ENCODE measurements at regions of chr20 and their contacts with region 1.

Region 1: GRCh38 chr20:47272893-47273590 is 83.5 kb downstream of the ZMYND8 start:
- DNase-seq: peak; percentile 89
- H3K4me3 Mint-ChIP-seq: peak overlapping the region; percentile 52
- H3K27ac Mint-ChIP-seq: peak overlapping the region; percentile 99
- H3K4me1 Mint-ChIP-seq: peaks cover 37% of the 10 kb centered on the region
- H3K27me3 Mint-ChIP-seq: no peaks in the 10 kb centered on the region
- CTCF ChIP-seq: peak; percentile 66

Region 2: DNA sequence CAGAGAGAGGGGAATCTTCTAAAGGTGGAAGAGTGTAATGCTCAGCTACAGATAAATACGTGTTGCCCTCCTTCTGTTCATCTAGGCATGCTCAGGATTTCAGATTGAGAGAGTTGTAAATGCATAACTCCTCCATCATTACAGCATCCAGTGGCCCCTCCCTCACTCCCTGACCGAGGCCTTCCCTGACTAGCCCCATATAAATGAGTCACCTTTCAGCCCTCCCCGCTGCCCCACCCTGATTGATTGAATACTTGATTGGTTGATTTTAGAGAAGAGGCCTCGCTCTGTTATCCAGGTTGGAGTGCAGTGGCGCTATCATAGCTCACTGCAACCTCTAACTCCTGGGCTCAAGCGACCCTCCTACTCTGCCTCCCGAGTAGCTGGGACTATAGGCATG is 184.7 kb before region 1 on chr20:
- CTCF ChIA-PET with region 1: no interaction called
- POLR2A ChIA-PET with region 1: no interaction called
- intact Hi-C with region 1: no loop called
- DNase-seq: no peak
- H3K4me3 Mint-ChIP-seq: no peak overlapping the region
- H3K27ac Mint-ChIP-seq: no peak overlapping the region
- H3K4me1 Mint-ChIP-seq: no peaks in the 10 kb centered on the region
- H3K27me3 Mint-ChIP-seq: no peaks in the 10 kb centered on the region
- CTCF ChIP-seq: no peak

Region 3: GRCh38 chr20:47150403-47151152 is 122.5 kb before region 1 on chr20:
- CTCF ChIA-PET with region 1: no interaction called
- POLR2A ChIA-PET with region 1: no interaction called
- intact Hi-C with region 1: no loop called
- DNase-seq: peak; percentile 88
- H3K4me3 Mint-ChIP-seq: no peak overlapping the region
- H3K27ac Mint-ChIP-seq: no peak overlapping the region
- H3K4me1 Mint-ChIP-seq: peaks cover 5% of the 10 kb centered on the region
- H3K27me3 Mint-ChIP-seq: no peaks in the 10 kb centered on the region
- CTCF ChIP-seq: peak; percentile 57

Region 4: DNA sequence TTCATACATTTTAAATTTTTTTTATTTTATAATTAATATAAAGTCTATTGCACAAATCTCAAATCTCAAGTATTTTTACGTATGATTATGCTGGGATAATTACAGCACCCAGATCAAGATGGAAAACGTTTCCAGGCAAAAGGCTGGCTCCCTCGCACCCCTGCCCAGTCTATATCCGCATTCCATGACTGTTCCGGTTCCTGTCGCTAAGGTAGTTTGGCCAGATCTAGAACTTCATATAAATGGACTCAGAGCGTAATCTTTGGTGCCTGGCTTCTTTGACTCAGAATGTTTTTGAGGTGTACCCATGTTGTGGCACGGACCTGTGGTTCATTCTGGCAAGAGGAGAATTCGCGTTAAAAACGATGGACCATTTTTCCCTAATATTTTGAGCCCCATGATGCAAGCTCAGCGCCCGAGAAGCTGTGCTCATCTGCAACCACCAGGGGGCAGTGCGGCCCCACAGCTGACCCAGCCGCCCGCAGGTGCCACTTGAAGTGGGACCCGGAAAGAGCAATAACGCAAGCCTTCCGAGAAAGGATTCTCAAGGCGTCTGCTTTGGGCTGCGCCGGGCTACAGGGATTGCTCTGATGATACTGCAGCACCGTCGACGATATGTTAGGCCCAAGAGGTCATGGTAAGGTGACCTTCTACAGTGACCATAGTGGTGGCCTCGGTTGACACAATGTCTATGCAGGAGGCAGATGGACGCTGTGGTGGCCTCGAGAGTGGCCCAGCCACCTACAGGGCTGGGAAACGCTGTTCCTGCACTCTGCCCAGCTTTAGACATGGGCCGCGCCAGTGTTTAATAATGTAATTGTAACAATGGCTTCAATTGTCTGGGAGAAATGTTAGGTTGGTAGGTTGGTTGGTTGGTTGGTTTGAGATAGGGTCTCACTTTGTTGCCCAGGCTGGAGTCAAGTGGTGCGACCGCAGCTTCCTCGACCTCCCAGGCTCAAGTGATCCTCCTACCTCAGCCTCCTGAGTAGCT is 76.7 kb before region 1 on chr20:
- CTCF ChIA-PET with region 1: interaction called, 5 read pairs
- POLR2A ChIA-PET with region 1: interaction called, 3 read pairs
- intact Hi-C with region 1: loop called (anchors 1 kb)
- DNase-seq: peak; percentile 70
- H3K4me3 Mint-ChIP-seq: no peak overlapping the region
- H3K27ac Mint-ChIP-seq: no peak overlapping the region
- H3K4me1 Mint-ChIP-seq: peaks cover 5% of the 10 kb centered on the region
- H3K27me3 Mint-ChIP-seq: no peaks in the 10 kb centered on the region
- CTCF ChIP-seq: peak; percentile 93

Region 5: DNA sequence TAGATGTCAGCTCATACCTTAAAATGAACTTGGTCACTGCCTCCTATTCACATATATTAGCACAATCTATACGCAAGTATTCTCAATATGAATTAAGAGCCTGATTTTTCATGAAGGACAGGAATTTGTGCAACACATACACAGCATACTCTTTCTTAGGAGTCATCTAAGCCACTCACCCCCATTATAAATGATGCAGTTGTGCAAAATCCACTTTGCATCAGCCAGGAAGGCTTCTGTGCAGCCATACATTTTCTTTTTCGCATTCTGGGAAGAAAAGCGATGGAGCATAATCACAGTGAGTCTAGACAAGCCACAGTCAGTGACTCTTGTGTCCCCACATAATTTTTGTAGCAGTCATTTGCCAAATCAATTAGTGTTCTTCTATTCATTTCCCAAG is 17.0 kb after region 1 on chr20:
- CTCF ChIA-PET with region 1: interaction called, 55 read pairs
- POLR2A ChIA-PET with region 1: interaction called, 17 read pairs
- intact Hi-C with region 1: no loop called
- DNase-seq: no peak
- H3K4me3 Mint-ChIP-seq: no peak overlapping the region
- H3K27ac Mint-ChIP-seq: no peak overlapping the region
- H3K4me1 Mint-ChIP-seq: no peaks in the 10 kb centered on the region
- H3K27me3 Mint-ChIP-seq: no peaks in the 10 kb centered on the region
- CTCF ChIP-seq: no peak

Region 6: DNA sequence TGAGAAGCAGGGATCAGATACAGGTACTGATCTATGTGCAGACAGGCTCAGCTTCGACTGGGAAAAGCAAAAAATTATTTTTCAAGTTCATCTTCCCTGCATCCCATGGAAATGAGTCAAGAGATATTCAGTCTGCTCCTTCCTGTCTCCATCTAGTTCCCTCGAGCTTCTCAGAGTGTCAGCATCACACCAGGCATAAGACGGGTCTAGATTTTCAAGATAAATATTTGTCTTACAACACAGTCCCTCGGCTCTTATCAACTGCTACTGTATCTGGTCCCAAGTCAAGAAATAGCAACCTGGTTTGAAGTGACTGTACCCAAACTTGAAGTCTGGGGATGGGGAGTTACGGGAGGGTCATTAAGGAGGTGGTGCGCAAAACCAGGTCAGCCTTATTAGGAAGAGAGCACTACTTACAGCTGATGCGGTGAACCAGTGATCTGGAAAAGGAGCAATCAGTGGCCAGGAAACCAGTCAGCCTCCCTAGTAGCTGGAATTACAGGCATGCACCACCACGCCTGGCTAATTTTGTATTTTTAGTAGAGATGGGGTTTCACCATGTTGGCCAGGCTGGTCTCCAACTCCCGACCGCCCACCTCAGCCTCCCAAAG is 53.7 kb after region 1 on chr20:
- CTCF ChIA-PET with region 1: interaction called, 22 read pairs
- POLR2A ChIA-PET with region 1: interaction called, 10 read pairs
- intact Hi-C with region 1: no loop called
- DNase-seq: no peak
- H3K4me3 Mint-ChIP-seq: no peak overlapping the region
- H3K27ac Mint-ChIP-seq: peak overlapping the region; percentile 69
- H3K4me1 Mint-ChIP-seq: peaks cover 34% of the 10 kb centered on the region
- H3K27me3 Mint-ChIP-seq: no peaks in the 10 kb centered on the region
- CTCF ChIP-seq: no peak

Region 7: DNA sequence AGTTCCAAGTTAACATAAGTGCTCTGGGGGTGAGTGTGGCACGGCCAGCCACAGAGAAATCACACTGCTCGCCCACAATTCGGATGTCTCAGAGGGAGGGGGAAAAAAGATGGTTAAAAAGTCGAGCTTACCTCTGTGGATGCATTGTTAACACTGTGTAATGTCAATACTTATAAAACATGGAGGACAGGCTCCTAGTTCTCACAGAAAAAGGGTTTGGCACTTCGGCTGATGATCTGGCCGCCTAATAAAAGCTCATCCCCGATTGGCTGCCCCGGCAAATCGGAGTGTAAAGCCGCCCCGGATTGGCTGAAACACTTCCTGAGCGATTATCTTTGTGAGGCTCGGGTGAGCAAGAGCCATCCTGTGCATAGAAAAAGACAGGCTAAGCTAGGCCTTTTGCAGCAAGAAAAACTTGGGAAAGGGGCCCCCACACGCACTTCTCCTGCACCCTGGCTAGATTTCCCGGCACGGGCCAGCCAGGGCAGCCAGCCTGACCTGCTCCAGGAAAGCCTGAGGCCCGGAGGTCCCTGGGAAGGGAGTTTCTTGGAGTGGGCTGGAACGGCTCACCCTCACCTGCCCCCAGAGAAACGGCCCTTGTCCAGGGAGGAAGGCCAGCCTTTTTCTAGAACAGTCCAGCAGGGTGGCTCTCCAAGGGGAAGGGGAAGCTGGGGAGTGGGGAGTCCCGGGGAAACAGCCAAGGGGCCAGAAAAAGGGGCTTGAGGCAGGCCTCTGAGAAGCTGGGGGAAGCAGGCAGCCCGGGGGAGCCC is 83.7 kb after region 1 on chr20 and contains the start of gene ZMYND8:
- CTCF ChIA-PET with region 1: interaction called, 66 read pairs
- POLR2A ChIA-PET with region 1: interaction called, 288 read pairs
- intact Hi-C with region 1: loop called (anchors 1 kb)
- DNase-seq: peak; percentile 94
- H3K4me3 Mint-ChIP-seq: peak within 1 kb of the TSS; percentile 70
- H3K27ac Mint-ChIP-seq: no peak within 1 kb of the TSS
- H3K4me1 Mint-ChIP-seq: peaks cover 72% of the 10 kb centered on the region
- H3K27me3 Mint-ChIP-seq: no peaks in the 10 kb centered on the region
- CTCF ChIP-seq: no peak
- total RNA-seq, gene ZMYND8: 126 and 127 TPM in 2 replicates

Region 8: GRCh38 chr20:47453142-47453782 is 180.2 kb after region 1 on chr20:
- CTCF ChIA-PET with region 1: interaction called, 12 read pairs
- POLR2A ChIA-PET with region 1: interaction called, 5 read pairs
- intact Hi-C with region 1: no loop called
- DNase-seq: peak; percentile 92
- H3K4me3 Mint-ChIP-seq: peak overlapping the region; percentile 45
- H3K27ac Mint-ChIP-seq: peak overlapping the region; percentile 91
- H3K4me1 Mint-ChIP-seq: peaks cover 27% of the 10 kb centered on the region
- H3K27me3 Mint-ChIP-seq: no peaks in the 10 kb centered on the region
- CTCF ChIP-seq: no peak

Region 9: DNA sequence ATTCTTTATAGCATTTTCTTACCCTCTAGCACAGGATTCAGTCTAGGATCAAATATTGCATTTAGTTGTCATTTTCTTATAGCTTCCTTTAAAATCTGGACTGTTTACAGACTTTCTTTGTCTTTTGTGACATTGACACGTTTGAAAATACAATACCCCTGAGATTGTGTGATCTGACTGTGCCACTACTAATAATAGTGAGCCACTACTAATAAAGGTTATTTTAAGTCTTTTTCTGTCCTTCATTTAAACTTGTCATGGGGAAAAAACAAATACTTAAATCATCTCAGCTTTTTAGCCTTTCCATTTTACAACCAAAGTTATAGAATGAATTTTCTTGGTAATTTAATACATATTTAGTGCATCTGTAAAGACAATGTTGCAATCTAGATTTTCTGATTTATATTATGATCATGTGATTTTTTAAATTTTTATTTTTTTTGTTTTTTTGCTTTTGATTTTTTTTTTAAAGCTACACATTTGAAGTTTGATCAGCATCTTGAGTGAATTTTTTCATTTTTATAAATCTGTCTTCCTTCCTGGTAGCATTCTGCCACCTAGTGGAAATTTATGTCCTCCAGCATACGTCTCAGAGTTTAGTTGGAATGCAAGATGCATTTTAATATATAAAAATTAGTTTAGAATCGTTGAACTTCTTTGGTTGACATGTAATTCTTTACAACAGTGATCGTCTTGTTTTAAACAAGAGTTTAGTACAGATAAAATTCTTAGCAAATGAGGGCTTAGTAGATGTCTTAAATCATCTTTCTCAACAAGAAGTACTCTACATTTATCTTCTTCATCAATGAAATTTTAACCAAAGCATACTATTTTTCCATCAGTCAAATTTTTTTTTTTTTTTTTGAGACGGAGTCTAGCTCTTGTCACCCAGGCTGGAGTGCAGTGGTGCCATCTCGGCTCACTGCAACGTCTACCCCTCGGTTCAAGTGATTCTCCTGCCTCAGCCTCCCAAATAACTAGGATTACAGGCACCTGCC is 348.1 kb after region 1 on chr20:
- CTCF ChIA-PET with region 1: interaction called, 23 read pairs
- POLR2A ChIA-PET with region 1: no interaction called
- intact Hi-C with region 1: loop called (anchors 5 kb)
- DNase-seq: peak; percentile 53
- H3K4me3 Mint-ChIP-seq: no peak overlapping the region
- H3K27ac Mint-ChIP-seq: peak overlapping the region; percentile 19
- H3K4me1 Mint-ChIP-seq: peaks cover 12% of the 10 kb centered on the region
- H3K27me3 Mint-ChIP-seq: no peaks in the 10 kb centered on the region
- CTCF ChIP-seq: peak; percentile 72

Measured in MCF 10A (cell line).